Aorta (tissue), 5 donors: ENCODE measurements at regions of chr2 and their contacts with region 1.

Region 1: DNA sequence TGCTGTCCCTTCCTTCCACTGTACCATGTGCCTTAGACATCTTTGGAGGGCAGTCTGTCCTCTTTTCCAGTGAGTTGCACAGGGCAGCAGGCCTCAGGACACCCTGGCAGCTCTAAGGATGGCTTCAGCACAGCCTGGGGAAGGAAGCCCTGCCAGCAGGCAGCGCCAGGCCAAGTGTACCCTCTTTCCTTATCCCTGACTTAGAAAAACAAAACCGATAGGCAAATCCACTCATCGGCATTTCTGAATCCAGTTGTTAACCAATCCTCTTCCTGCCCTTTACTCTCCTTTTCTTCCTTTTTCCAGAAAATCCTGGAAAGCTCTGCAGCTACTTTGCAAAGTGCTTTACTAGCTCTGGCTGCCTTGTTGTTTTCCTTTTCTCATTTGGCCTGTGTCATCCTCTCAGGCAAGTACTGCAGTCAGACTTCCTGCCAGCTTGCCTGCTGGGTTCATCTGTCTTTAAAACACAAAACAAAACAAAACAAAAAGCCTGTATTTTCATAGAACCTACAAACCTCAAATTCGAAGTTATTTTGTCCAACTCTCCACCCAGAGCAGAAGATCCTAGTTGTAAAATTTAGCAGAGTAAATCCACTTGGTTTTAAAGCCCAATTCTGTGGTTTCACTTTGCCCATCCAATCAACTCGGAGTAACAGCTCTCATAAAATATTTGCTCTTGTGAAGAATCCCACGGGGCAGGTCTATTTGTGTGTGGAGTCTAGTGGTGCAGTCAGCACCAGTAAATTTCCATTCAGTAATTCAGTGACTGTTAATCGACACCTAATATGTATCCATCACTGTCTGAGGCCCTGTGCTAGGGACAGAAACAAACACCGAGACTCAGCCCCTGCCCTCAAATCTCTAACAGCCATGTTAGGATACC is 45.2 kb downstream of the PCBP1 start:
- DNase-seq: no peak
- ATAC-seq: peak; percentile 86
- H3K4me3 ChIP-seq: peak overlapping the region in 1 of 2 donors; percentile 8
- H3K27ac ChIP-seq: peak overlapping the region; percentile 77 to 84
- H3K4me1 ChIP-seq: peaks cover 0 to 7% of the 10 kb centered on the region in 2 donors
- H3K27me3 ChIP-seq: no peaks in the 10 kb centered on the region

Region 2: DNA sequence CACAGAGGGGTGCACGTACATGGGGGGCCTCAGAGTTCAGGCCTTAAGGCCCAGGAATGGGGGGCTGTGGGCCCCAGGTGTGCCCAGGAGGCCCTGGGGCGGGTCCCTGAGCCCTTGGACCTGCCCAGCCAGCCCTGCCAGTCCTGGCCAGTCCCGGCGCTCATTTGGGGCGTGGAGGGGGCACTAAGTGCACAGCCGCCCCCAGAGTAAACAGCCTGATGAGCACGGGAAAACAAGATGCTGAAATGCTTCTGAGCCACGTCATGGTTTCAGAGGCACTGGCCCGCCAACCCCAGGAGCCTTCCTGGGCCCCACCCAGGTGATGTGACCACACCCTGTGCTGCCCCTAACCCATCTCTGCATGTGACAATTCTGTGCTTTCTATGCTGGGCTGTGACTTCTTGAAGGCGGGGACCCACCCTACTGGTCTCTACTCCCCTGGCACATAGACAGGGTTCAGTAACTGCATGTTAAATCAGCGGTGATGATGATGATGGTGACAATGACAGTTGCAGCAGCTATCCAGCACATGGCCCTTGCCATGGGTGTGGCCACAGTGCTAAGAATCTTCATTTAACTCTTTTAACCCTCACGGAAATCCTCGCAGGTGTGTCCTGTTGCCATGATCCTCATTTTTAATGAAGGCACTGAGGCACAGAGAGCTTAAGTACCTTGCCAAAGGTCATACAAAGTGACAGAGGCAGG is 142.9 kb before region 1 on chr2:
- intact Hi-C with region 1: no loop called
- DNase-seq: peak in 1 of 2 donors; percentile 61
- ATAC-seq: no peak
- H3K4me3 ChIP-seq: no peak overlapping the region
- H3K27ac ChIP-seq: no peak overlapping the region
- H3K4me1 ChIP-seq: no peaks in the 10 kb centered on the region
- H3K27me3 ChIP-seq: no peaks in the 10 kb centered on the region

Region 3: DNA sequence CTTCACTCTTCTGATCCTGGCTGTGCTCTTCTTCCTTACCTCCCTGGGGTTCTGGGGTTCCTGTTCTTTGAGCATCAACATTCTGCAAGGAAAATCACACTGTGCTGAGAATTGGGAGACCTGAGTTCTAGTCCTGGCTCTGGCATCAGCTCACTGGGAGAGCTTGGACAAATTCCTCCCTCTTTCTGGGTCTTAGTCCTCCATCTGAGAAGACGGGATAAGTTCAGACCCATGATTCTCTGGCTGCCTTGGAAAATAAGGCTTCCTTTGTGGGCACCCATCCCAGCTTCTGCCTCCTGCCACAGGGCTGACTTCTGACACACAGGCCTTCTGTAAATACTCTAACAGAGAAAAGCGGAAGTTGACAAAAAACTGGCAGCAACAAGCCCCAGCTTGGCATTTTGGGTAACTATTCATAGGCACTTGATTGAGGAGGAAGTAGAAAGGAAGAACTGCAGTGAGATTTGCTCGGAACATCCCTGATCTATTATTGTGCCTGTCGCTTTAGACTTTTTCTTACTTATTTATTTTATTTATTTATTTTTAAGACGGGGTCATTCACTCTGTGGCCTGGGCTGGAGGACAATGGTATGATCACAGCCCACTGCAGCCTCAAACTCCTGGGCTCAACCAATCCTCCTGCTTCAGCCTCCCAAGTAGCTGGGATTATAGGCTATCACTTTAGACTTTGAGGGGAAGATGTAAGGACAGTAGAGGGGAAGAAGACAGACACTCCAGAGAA is 37.3 kb before region 1 on chr2:
- intact Hi-C with region 1: loop called in 1 of 2 experiments (anchors 2 kb)
- DNase-seq: peak; percentile 75 to 83
- ATAC-seq: peak; percentile 88
- H3K4me3 ChIP-seq: no peak overlapping the region
- H3K27ac ChIP-seq: peak overlapping the region; percentile 84 to 90
- H3K4me1 ChIP-seq: peaks cover 0 to 7% of the 10 kb centered on the region in 2 donors
- H3K27me3 ChIP-seq: no peaks in the 10 kb centered on the region

Region 4: DNA sequence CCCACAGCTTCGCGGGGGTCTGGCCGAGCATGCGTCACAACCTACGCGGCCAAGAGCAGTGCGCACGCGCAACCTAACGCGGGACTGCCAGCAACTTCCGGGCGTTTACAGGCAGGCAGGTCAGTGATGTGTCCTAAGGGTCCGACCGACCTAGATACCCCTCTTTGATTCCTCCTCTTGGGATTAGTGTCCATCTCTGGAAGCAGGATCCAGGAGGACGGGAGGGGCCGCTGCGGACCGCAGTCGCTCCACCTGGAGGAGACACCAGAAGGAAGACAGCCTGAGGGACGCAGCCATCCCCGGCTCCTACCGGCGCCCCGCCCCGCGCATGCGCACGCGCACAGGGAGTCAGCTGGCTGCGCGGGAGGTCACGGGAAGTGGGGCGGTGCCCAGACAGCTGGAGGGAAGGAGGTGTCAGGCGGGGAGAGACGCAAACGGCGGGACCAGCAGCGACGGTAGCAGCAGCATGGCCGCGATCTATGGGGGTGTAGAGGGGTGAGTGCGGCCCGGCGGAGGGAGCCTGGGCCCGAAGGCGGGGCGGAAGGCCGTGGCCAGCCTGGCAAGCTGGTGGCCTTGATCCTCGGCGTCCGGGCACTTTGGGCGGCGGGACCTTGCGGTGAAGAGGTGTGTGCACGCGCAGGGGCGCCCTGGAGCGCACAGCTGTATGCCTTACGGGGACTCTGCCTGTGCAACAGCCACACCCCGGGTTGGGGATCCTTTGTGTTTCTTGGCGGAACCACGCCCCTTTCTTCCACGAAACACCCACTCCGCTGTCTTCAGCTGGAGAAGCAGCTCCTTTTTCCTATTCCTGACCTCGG is 935.9 kb after region 1 on chr2 and contains the start of gene NAGK:
- intact Hi-C with region 1: no loop called
- DNase-seq: peak; percentile 98
- ATAC-seq: peak; percentile 97
- H3K4me3 ChIP-seq: peak within 1 kb of the TSS; percentile 39 to 56
- H3K27ac ChIP-seq: peak within 1 kb of the TSS in 1 of 2 donors; percentile 79
- H3K4me1 ChIP-seq: no peaks in the 10 kb centered on the region
- H3K27me3 ChIP-seq: no peaks in the 10 kb centered on the region
- total RNA-seq, gene NAGK: 80.1 to 141 TPM